SK-N-SH (cell line): ENCODE measurements at regions of chr12 and their contacts with region 1.

Region 1: GRCh38 chr12:39990122-39991101 is 115.5 kb downstream of the SLC2A13 start:
- DNase-seq: peak; percentile 62
- H3K4me3 ChIP-seq: no peak overlapping the region; a peak in 1 of 4 replicates
- H3K27ac ChIP-seq: no peak overlapping the region
- H3K4me1 ChIP-seq: no peaks in the 10 kb centered on the region
- H3K27me3 ChIP-seq: no peaks in the 10 kb centered on the region
- CTCF ChIP-seq: peak; percentile 89
- EP300 ChIP-seq: no peak
- RAD21 ChIP-seq: peak; percentile 86

Region 2: GRCh38 chr12:39764944-39765560 is 225.4 kb before region 1 on chr12:
- CTCF ChIA-PET with region 1: interaction called, 38 read pairs
- POLR2A ChIA-PET with region 1: no interaction called
- DNase-seq: peak; percentile 39
- H3K4me3 ChIP-seq: no peak overlapping the region
- H3K27ac ChIP-seq: no peak overlapping the region
- H3K4me1 ChIP-seq: no peaks in the 10 kb centered on the region
- H3K27me3 ChIP-seq: no peaks in the 10 kb centered on the region
- CTCF ChIP-seq: peak; percentile 79
- EP300 ChIP-seq: no peak
- RAD21 ChIP-seq: peak; percentile 94

Region 3: GRCh38 chr12:39798429-39798828 is 192.0 kb before region 1 on chr12:
- CTCF ChIA-PET with region 1: interaction called, 15 read pairs
- POLR2A ChIA-PET with region 1: no interaction called
- DNase-seq: no peak
- H3K4me3 ChIP-seq: no peak overlapping the region
- H3K27ac ChIP-seq: no peak overlapping the region
- H3K4me1 ChIP-seq: no peaks in the 10 kb centered on the region
- H3K27me3 ChIP-seq: no peaks in the 10 kb centered on the region
- CTCF ChIP-seq: no peak
- EP300 ChIP-seq: no peak
- RAD21 ChIP-seq: no peak

Region 4: GRCh38 chr12:39804898-39805297 is 185.5 kb before region 1 on chr12:
- CTCF ChIA-PET with region 1: interaction called, 15 read pairs
- POLR2A ChIA-PET with region 1: no interaction called
- DNase-seq: no peak
- H3K4me3 ChIP-seq: no peak overlapping the region
- H3K27ac ChIP-seq: no peak overlapping the region
- H3K4me1 ChIP-seq: no peaks in the 10 kb centered on the region
- H3K27me3 ChIP-seq: no peaks in the 10 kb centered on the region
- CTCF ChIP-seq: no peak
- EP300 ChIP-seq: no peak
- RAD21 ChIP-seq: no peak

Region 5: DNA sequence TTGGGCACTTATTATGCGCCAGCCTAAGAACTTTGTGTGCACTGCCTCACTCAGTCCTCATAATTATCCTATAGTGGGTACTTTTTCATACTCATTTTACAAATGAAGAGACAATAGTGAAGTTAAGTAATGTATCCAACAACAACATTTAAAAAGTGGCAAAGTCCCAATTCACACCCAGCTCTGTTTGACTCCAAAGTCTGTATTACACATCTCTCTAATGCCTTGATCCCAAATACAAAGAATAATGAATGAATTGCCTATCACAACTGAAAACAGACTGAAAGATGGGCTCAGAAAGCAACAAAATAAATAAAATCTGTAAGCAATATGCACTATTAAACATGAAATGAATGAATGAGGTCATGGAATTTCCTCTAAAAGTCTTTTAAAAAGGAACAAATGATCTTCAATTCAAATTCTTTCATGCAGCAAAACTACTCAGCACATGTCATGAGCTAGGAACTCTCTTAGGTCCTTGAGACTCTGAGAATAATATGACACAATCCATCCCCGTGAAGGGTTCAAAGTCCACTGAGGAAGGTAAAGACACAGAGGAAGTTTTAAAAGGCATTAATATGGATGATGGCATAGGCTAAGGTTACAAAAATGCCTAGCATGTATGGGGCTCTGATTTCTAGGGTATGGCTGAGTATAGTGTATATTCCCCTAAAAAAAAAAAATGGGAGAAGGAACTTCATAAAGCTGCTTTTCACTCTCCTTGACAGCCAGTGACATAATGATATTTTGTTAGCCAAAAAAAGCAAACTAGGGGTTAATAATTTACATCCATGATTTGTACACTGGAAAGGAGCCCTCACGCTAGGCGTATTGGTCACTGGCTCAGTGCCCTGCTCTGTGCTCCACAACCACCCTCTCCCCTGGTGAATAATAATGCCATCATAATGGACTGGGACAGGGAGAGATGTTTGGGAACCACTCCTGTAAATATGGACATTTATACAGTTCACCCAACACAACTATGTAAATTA is 12.1 kb after region 1 on chr12:
- CTCF ChIA-PET with region 1: interaction called, 14 read pairs
- POLR2A ChIA-PET with region 1: no interaction called
- DNase-seq: no peak
- H3K4me3 ChIP-seq: no peak overlapping the region
- H3K27ac ChIP-seq: no peak overlapping the region
- H3K4me1 ChIP-seq: no peaks in the 10 kb centered on the region
- H3K27me3 ChIP-seq: no peaks in the 10 kb centered on the region
- CTCF ChIP-seq: no peak
- EP300 ChIP-seq: no peak
- RAD21 ChIP-seq: no peak

Region 6: GRCh38 chr12:40010899-40011774 is 20.7 kb after region 1 on chr12:
- CTCF ChIA-PET with region 1: interaction called, 17 read pairs
- POLR2A ChIA-PET with region 1: no interaction called
- DNase-seq: peak; percentile 40
- H3K4me3 ChIP-seq: peak overlapping the region in 1 of 2 experiments; percentile 14; a peak in 2 of 4 replicates
- H3K27ac ChIP-seq: no peak overlapping the region
- H3K4me1 ChIP-seq: peaks cover 0 to 5% of the 10 kb centered on the region in 2 experiments; a peak in 1 of 4 replicates
- H3K27me3 ChIP-seq: no peaks in the 10 kb centered on the region
- CTCF ChIP-seq: peak; percentile 74
- EP300 ChIP-seq: no peak
- RAD21 ChIP-seq: peak; percentile 68